ENCODE measurements at regions of chr6 and their contacts with region 1.

Region 1: DNA sequence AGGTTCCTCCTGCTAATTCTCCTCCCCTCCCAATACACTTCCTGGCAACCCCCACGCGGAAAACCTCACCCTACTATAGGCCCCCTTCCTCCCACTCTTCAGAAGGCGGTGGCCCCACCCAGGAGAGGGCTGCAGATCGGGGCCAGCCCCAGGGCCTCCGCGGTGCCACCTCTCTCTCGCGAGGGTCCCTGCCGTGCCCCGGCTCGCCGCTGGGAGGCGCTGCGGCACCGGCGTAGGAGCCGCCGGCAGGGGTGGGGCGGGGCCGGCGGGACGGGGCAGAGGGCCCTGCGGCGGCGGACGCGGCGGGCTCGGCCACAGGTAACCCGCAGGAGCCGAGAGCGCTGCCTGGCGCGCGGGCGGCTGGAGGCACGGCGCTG is at the start of gene ANKRD6:
- DNase-seq: peak; percentile 81
- H3K4me3 Mint-ChIP-seq: peak within 1 kb of the TSS; percentile 81
- H3K27ac Mint-ChIP-seq: no peak within 1 kb of the TSS
- H3K4me1 Mint-ChIP-seq: peaks cover 20% of the 10 kb centered on the region
- H3K27me3 Mint-ChIP-seq: peaks cover 56% of the 10 kb centered on the region

Region 2: DNA sequence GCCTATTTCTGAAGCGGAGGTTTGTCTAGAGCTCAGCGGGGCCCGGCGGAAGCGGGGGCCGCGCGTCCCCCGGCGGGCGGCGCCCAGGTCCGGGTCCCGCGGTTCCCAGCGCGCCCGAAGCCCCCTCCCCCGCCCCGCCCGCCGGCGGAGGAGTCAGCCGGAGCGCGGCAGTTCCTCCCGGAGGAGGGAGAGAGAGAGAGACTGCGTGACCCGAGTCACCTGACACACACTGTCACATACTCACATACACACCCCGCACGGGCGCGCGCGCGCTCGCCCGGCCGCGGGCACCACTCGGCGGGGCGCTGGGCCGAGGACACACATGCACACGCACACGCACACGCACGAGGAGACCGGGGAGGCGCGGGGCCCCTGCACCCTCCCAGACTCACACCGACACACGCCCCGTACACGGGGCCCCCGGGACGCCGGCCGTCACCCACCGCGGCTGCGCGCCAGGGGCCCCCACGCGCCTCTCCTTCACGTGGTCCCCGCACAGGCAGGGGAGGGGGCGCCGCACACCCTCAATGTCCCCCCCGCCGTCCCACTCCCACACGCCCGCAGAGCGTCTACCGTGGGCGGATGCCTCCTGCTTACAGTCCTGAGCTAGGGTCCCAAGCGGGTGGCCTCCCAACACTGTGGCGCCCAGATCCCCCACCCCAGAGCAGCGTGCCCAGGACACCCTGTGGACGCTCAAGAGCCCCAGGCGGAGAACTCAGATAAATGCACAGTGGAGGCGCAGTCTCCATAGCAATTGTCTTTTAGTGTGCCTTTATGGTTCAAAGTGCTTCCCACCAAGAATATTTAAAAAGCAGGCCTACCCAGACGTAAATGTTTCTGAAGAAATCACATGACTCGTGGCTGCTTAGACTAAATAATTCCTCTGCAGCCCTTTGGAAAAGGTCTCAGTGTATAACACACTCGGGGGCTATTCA is 20.5 kb before region 1 on chr6 and contains the start of gene RRAGD:
- CTCF ChIA-PET with region 1: interaction called, 19 read pairs
- DNase-seq: peak; percentile 77
- H3K4me3 Mint-ChIP-seq: peak within 1 kb of the TSS; percentile 94
- H3K27ac Mint-ChIP-seq: peak within 1 kb of the TSS; percentile 33
- H3K4me1 Mint-ChIP-seq: peaks cover 24% of the 10 kb centered on the region
- H3K27me3 Mint-ChIP-seq: peaks cover 60% of the 10 kb centered on the region

Region 3: GRCh38 chr6:89610149-89610642 is 177.3 kb after region 1 on chr6:
- CTCF ChIA-PET with region 1: interaction called, 43 read pairs
- DNase-seq: peak; percentile 85
- H3K4me3 Mint-ChIP-seq: no peak overlapping the region
- H3K27ac Mint-ChIP-seq: peak overlapping the region; percentile 15
- H3K4me1 Mint-ChIP-seq: peaks cover 19% of the 10 kb centered on the region
- H3K27me3 Mint-ChIP-seq: no peaks in the 10 kb centered on the region

Measured in activated naive CD4-positive, alpha-beta T cell treated with anti-CD3 and anti-CD28 coated beads, Interleukin-2, amount 10 ng/mL, durations not matched to agents 7 days and 5 days (primary cell).